ENCODE measurements at regions of chr15 and their contacts with region 1.

Region 1: DNA sequence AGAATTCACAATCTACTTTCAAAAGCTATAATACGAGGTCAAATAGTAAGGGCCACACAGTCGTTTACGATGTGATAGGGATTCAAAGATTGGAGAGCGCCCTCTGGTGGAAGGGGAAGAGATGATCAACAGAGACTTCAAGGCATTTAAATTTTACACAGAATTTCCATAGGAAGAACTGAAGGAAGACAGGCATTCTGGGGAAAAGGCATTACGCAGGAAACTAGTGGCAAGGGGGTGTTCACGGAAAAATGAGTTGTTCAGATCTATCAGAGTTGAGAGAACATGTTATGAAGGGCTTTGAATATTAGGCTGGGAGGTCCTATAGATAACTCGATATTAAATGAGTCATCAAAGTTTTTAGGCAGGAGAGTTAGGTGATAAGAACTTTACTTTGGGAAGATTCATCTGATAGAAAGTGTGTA is 128.7 kb downstream of the FRMD5 start:
- H3K4me3 ChIP-seq: no peak overlapping the region
- H3K27ac ChIP-seq: no peak overlapping the region
- H3K4me1 ChIP-seq: no peaks in the 10 kb centered on the region
- CTCF ChIP-seq: 0 out of 2 replicates have a peak, but pooled peaks have one; percentile 30

Region 2: GRCh38 chr15:43903864-43904290 is 162.5 kb before region 1 on chr15:
- CTCF ChIA-PET with region 1: interaction called, 53 read pairs
- POLR2A ChIA-PET with region 1: no interaction called
- H3K4me3 ChIP-seq: no peak overlapping the region
- H3K27ac ChIP-seq: no peak overlapping the region
- H3K4me1 ChIP-seq: no peaks in the 10 kb centered on the region
- CTCF ChIP-seq: peak; percentile 73; the same call in 1 of the 2 replicates

Region 3: GRCh38 chr15:44053458-44053857 is 12.9 kb before region 1 on chr15:
- CTCF ChIA-PET with region 1: interaction called, 12 read pairs
- POLR2A ChIA-PET with region 1: no interaction called
- H3K4me3 ChIP-seq: no peak overlapping the region
- H3K27ac ChIP-seq: no peak overlapping the region
- H3K4me1 ChIP-seq: no peaks in the 10 kb centered on the region
- CTCF ChIP-seq: no peak

Region 4: GRCh38 chr15:44550256-44550655 is 483.9 kb after region 1 on chr15:
- CTCF ChIA-PET with region 1: no interaction called
- POLR2A ChIA-PET with region 1: no interaction called
- H3K4me3 ChIP-seq: no peak overlapping the region
- H3K27ac ChIP-seq: no peak overlapping the region
- H3K4me1 ChIP-seq: 0 out of 2 replicates have a peak, but pooled peaks cover under 1% of the 10 kb centered on the region
- CTCF ChIP-seq: no peak